ENCODE measurements at regions of chr15 and their contacts with region 1.

Region 1: DNA sequence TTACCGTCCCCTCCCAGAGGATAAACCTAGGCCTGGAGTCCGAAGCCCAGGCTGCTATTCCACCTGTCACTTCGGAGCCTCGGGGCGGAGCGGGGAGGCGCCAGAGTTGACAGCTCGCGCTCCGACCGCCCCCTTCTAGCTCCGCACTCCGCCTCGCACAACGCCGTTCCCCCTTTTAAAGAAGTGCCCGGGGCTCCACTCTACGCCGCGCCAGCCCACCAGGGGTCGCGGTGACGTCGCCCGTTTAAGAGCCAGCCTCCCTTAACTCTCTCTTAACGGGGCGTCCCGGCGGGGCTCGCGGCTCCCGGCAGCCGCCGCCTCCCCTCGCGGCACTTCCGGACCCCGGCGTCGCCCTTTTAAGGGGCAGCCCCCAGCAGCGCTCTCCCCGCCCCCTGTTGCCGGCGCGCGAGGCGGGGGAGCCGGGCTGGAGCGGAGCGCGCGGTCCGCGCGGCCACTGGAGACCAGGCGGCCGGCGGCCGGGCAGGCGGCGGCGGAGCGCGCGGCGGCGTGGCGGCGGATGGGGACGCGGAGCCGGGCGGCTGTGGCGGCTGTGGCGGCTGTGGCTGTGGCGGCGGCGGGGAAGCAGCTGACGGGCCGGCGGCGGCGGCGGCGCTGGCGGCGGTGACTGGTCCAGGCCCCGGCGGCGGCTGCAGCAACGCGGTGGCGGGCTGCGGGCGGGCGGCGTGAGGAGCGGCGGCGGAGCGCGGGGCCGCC is at the start of gene INAFM2:
- DNase-seq: no peak
- H3K4me3 ChIP-seq: peak within 1 kb of the TSS; percentile 73
- CTCF ChIP-seq: peak; percentile 70

Region 2: DNA sequence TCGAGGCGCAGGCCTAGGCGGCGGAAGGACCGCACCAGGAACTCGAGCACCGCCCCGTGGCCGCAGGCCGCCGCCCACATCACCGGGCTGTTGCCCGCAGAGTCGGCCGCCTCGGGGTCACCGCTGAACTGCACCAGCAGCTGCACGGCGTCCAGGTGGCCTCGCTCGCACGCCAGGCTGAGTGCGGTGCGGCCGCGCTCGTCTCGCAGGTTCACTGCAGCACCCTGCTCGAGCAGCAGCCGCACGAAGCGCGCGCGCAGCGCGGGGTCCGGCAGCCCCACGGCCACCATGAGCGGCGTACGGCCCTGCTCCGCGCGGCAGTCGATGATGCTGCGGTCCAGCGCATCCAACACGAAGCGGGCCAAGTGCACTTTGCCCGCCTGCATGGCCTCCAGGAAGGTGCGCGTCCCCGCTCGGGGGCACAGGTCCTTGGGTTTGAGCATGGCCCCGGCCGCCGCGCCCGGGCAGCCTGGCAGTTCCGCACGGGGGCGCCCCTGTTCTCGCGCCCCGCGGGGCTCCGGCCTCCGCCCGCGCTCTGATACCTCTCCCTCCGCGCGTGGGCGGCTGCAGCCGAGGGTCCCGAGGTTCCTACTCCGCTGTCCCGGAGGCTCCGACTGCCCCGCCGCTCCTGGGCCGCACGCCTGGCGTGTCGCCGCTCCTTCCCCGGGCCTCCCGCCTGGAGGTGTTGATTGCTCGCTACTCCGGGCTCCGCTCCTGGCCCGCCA is 41.1 kb before region 1 on chr15:
- CTCF ChIA-PET with region 1: interaction called, 500 read pairs
- POLR2A ChIA-PET with region 1: interaction called, 3 read pairs
- DNase-seq: no peak
- H3K4me3 ChIP-seq: peak overlapping the region; percentile 40
- CTCF ChIP-seq: peak; percentile 34

Region 3: DNA sequence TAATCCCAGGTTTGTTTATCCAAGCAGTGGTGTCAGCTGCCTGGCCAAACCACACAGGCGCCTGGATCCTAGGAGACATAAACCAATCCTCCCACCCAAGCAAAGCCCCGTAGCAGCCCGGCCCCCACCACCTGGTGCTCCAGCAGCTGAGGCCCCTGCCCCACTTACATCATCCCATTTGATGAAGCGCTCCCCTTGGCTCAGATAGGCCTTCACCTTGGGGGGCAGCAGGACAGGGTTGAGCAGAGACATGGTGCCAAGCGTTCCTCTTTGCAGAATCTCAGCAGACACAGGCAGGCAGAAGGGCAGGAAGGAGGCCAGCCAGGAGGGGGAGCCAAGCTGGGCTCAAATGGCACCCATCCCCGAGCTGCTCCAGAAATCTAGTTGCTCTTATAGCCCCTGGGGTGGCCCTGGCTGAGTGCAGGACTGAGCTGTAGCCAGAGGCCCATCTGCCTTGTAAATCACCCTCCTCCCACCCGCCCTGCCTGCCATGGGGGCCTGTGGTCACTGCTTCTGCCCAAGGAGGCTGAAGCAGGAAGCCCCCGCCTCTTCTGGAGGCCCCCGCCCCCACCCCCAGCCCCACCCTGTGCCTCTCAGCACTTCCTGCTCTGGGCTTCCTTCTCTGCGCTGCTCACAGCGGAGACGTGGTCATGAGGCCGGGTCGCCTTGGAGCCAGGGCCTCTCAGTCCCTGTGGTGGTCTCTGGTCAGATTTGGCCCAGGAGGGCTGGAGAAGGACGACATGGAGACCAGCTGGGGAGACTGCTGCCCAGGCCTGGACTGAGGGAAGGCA is 15.8 kb before region 1 on chr15 and contains the start of gene PLCB2:
- CTCF ChIA-PET with region 1: interaction called, 385 read pairs
- POLR2A ChIA-PET with region 1: no interaction called
- DNase-seq: no peak
- H3K4me3 ChIP-seq: no peak within 1 kb of the TSS
- CTCF ChIP-seq: peak; percentile 52

Region 4: DNA sequence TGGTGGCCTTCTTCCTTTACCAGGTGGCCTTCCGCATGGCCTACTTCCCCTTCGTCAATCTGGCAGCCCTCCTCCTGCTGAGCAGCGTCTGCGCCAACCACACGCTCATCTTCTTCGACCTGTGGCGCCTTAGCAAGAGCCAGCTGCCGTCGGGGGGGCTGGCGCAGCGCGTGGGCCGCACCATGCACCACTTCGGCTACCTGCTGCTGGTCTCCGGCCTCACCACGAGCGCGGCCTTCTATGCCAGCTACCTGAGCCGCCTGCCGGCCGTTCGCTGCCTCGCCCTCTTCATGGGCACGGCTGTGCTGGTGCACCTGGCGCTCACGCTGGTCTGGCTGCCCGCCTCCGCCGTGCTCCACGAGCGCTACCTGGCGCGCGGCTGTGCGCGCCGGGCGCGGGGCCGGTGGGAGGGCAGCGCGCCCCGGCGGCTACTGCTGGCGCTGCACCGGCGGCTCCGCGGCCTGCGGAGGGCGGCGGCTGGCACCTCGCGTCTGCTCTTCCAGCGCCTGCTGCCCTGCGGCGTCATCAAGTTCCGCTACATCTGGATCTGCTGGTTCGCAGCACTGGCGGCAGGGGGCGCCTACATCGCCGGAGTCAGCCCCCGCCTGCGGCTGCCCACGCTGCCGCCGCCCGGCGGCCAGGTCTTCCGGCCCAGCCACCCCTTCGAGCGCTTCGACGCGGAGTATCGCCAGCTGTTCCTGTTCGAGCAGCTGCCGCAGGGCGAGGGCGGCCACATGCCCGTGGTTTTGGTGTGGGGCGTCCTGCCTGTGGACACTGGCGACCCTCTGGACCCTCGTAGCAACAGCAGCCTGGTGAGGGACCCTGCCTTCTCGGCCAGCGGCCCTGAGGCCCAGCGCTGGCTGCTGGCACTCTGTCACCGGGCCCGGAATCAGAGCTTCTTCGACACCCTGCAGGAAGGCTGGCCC is 44.6 kb after region 1 on chr15:
- CTCF ChIA-PET with region 1: interaction called, 13 read pairs
- POLR2A ChIA-PET with region 1: no interaction called
- DNase-seq: no peak
- H3K4me3 ChIP-seq: peak overlapping the region; percentile 44
- CTCF ChIP-seq: peak; percentile 85

Region 5: DNA sequence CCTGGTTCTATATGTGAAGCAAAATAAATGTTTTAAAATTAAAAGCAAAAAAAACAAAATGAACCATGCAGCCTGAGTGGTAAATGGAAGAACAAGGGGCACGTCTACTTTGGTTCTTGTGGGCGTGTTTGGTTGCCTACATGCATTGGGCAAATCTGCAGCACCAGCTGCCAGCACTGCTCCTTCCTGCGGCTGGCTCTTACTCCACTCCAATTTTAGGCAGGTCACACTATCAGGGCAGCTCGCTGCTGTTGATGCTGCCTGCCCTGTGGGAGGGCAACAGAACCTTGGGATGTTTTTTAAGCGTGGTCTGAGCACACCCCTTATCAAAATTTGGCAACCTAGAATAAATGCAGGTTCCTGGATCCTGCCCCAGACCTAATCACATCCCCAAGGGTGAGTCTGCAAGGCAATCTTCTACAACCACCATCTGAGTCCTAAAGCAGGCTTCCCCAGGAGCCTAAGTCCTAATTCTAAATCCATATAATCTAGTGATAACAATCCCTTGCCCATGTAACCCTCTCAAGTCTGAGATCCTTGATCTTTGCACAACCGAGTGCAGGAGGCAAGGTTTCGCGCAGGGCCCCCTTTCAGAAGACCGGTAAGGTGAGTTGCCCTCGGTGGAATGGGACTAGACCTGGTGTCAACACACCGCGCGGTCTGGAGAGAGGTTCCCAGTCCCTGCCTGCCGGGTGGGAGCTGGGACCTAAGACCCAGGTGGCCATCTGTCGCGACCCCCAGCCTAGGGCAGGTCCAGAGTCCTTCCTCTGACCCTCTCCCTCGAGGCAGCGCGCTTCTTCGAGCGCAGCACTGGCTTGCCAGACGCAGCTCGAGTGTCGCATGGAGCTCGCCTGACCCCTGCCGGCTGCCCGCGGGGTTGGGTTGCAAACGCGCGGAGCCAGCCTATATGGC is 98.1 kb after region 1 on chr15:
- CTCF ChIA-PET with region 1: interaction called, 115 read pairs
- POLR2A ChIA-PET with region 1: interaction called, 4 read pairs
- DNase-seq: no peak
- H3K4me3 ChIP-seq: no peak overlapping the region; the same call in 1 of the 2 replicates
- CTCF ChIP-seq: peak; percentile 97